ENCODE measurements at regions of chr13 and their contacts with region 1.

Region 1: GRCh38 chr13:73754727-73755292 is 379.4 kb downstream of the KLF12 start:
- DNase-seq: no peak
- H3K4me3 ChIP-seq: no peak overlapping the region
- H3K27ac ChIP-seq: no peak overlapping the region
- H3K4me1 ChIP-seq: no peaks in the 10 kb centered on the region
- H3K27me3 ChIP-seq: no peaks in the 10 kb centered on the region
- CTCF ChIP-seq: peak; percentile 43 to 61 (median 47)
- EP300 ChIP-seq: no peak
- POLR2A ChIP-seq: no peak

Region 2: DNA sequence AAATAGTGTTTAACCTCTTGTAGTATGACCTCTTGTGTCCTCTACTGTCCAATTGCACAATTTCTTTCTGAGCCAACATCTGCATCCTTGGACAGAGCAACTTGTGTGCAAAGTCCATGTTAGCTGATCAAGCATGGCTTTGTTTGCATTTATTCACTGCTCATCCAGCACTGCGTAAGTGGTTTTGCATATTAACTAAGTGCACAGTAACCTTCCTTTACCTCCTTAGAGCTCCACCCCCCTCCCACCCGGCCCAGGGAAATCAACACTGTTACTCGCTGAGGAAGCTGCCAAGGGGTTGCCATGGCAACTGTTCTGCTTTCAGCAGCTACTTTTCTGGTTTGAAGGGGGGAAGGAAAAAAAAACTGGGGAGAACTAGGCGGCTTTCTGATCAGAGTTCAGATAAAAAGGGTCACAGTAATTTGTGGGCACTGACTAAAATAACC is 532.9 kb after region 1 on chr13:
- intact Hi-C with region 1: loop called in 1 of 4 experiments (anchors 10 kb)
- DNase-seq: peak; percentile 72 to 86 (median 77)
- H3K4me3 ChIP-seq: no peak overlapping the region
- H3K27ac ChIP-seq: no peak overlapping the region
- H3K4me1 ChIP-seq: peaks cover 8% of the 10 kb centered on the region
- H3K27me3 ChIP-seq: no peaks in the 10 kb centered on the region
- CTCF ChIP-seq: no peak
- EP300 ChIP-seq: no peak
- POLR2A ChIP-seq: no peak

Region 3: GRCh38 chr13:75219479-75220237 is 1464.8 kb after region 1 on chr13:
- intact Hi-C with region 1: loop called in 1 of 4 experiments (anchors 5 kb)
- DNase-seq: peak; percentile 65 to 90 (median 85)
- H3K4me3 ChIP-seq: no peak overlapping the region
- H3K27ac ChIP-seq: no peak overlapping the region
- H3K4me1 ChIP-seq: peaks cover 3% of the 10 kb centered on the region
- H3K27me3 ChIP-seq: no peaks in the 10 kb centered on the region
- CTCF ChIP-seq: peak; percentile 74 to 87 (median 80)
- EP300 ChIP-seq: no peak
- POLR2A ChIP-seq: no peak